ENCODE measurements at regions of chr20 and their contacts with region 1.

Region 1: GRCh38 chr20:62409931-62410745 is 3.1 kb upstream of the CABLES2 start:
- DNase-seq: peak in 1 of 2 experiments; percentile 85
- H3K4me3 ChIP-seq: peak overlapping the region in 1 of 4 experiments; percentile 34; a peak in 1 of 8 replicates
- H3K27ac ChIP-seq: no peak overlapping the region
- H3K4me1 ChIP-seq: peaks cover 0 to 26% (median 8%) of the 10 kb centered on the region in 4 experiments; a peak in 6 of 7 replicates
- H3K27me3 ChIP-seq: peaks cover 0 to 8% (median 1%) of the 10 kb centered on the region in 4 experiments; a peak in 2 of 7 replicates
- CTCF ChIP-seq: peak in 2 of 3 experiments; percentile 75 to 86; a peak in 3 of 4 replicates
- EP300 ChIP-seq: no peak
- POLR2A ChIP-seq: no peak
- RAD21 ChIP-seq: peak; percentile 79 to 87

Region 2: DNA sequence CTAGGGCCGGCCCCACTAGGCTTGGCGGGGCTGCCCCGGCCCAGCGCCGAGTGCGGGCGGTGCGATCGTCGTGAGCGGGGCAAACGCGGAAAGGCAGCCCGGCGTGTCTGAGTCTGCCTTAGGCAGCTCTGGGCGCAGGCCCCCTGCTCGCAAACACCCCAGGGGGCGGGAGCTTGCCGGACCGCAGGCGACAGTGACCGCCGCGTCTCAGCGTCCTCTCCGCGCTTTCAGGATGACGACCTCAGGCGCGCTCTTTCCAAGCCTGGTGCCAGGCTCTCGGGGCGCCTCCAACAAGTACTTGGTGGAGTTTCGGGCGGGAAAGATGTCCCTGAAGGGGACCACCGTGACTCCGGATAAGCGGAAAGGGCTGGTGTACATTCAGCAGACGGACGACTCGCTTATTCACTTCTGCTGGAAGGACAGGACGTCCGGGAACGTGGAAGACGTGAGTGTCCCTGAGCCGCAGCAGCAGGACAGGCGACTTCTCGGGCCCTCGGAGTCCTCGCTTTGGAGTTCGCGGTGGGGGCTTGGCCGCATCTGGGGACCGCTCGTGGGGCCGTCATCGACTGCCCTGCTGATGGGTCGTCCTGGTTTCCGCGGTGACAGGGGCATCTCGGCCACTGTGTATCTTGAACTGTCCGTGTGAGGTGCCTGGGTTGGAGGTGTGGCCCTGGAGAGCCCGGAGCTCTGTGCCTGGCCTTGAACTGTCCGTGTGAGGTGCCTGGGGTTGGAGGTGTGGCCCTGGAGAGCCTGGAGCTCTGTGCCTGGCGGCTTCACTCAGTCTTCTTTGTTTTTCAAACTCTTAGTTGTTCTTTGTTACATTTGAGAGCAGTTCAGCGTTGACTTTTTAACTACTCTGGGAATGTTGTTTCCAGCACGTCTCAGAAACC is 106.6 kb before region 1 on chr20:
- CTCF ChIA-PET with region 1: no interaction called
- POLR2A ChIA-PET with region 1: no interaction called
- DNase-seq: no peak
- H3K4me3 ChIP-seq: peak overlapping the region; percentile 62 to 96 (median 90)
- H3K27ac ChIP-seq: peak overlapping the region; percentile 60; the same call in 1 of the 2 replicates
- H3K4me1 ChIP-seq: peaks cover 0 to 9% (median 4%) of the 10 kb centered on the region in 4 experiments; a peak in 5 of 7 replicates
- H3K27me3 ChIP-seq: no peaks in the 10 kb centered on the region
- CTCF ChIP-seq: no peak
- EP300 ChIP-seq: no peak
- POLR2A ChIP-seq: no peak; a peak in 1 of 3 replicates
- RAD21 ChIP-seq: no peak

Region 3: GRCh38 chr20:62337558-62338293 is 72.4 kb before region 1 on chr20:
- CTCF ChIA-PET with region 1: no interaction called
- POLR2A ChIA-PET with region 1: no interaction called
- DNase-seq: no peak
- H3K4me3 ChIP-seq: no peak overlapping the region
- H3K27ac ChIP-seq: no peak overlapping the region
- H3K4me1 ChIP-seq: no peaks in the 10 kb centered on the region
- H3K27me3 ChIP-seq: no peaks in the 10 kb centered on the region
- CTCF ChIP-seq: no peak
- EP300 ChIP-seq: no peak
- POLR2A ChIP-seq: no peak
- RAD21 ChIP-seq: no peak

Region 4: GRCh38 chr20:62420951-62421715 is 11.0 kb after region 1 on chr20:
- CTCF ChIA-PET with region 1: interaction called, 104 read pairs
- POLR2A ChIA-PET with region 1: interaction called, 15 read pairs
- DNase-seq: no peak
- H3K4me3 ChIP-seq: no peak overlapping the region
- H3K27ac ChIP-seq: no peak overlapping the region
- H3K4me1 ChIP-seq: peaks cover 0 to 13% (median under 1%) of the 10 kb centered on the region in 4 experiments; a peak in 5 of 7 replicates
- H3K27me3 ChIP-seq: no peaks in the 10 kb centered on the region
- CTCF ChIP-seq: no peak
- EP300 ChIP-seq: no peak
- POLR2A ChIP-seq: no peak
- RAD21 ChIP-seq: no peak

Region 5: GRCh38 chr20:62427172-62428001 is 17.2 kb after region 1 on chr20 and contains the start of gene RBBP8NL:
- CTCF ChIA-PET with region 1: interaction called, 104 read pairs
- POLR2A ChIA-PET with region 1: interaction called, 15 read pairs
- DNase-seq: peak in 1 of 2 experiments; percentile 88
- H3K4me3 ChIP-seq: peak within 1 kb of the TSS in 3 of 4 experiments; percentile 22 to 36 (median 28); a peak in 5 of 8 replicates
- H3K27ac ChIP-seq: peak within 1 kb of the TSS; percentile 58
- H3K4me1 ChIP-seq: peaks cover 0 to 43% (median 31%) of the 10 kb centered on the region in 4 experiments; a peak in 6 of 7 replicates
- H3K27me3 ChIP-seq: no peaks in the 10 kb centered on the region; a peak in 1 of 7 replicates
- CTCF ChIP-seq: peak in 2 of 3 experiments; percentile 48 to 60; a peak in 3 of 4 replicates
- EP300 ChIP-seq: 0 out of 3 replicates have a peak, but pooled peaks of 1 of the 2 experiments have one; percentile 60
- POLR2A ChIP-seq: no peak
- RAD21 ChIP-seq: peak; percentile 44 to 63; a peak in 3 of 4 replicates
- total RNA-seq, gene RBBP8NL: 0.43 and 0.59 TPM in 2 replicates

Region 6: DNA sequence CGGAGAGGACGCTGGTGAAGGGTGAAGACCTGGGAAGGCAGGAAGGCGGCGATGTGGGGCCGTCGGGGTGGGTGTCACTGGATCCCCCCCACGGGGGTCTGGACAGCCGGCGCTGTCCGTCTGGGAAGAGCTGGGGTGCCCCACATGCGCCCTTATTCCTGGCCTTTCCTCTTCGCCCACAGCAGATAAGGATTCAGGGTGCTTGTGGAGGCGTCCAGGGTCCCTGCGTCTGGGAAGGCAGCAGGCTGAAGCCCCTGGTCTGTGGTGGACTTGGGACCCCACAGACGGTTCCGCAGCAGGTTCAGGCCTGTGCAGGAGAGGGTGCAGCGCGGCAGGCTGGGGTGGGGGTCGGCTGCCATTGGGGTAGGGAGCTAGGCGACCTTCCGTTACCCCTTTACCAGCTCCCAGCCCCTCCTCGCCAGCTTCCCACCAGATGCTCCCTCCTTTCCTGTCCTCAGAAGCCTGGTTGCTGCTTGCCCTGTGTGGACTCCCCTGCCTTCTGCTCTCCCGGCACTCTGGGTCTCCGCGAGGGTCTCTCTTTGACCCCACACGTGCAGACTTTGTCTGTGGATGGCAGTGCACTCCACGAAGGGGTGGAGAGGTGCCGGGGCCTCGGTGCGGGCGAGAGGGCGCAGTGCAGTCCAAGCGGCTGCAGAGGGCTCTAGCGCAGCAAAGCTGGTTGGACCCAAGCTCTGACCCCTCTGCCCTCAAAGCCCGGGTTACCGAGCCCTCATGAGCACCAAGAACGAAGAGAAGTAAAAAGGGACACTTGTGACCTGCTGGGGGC is 67.7 kb after region 1 on chr20:
- CTCF ChIA-PET with region 1: interaction called, 14 read pairs
- POLR2A ChIA-PET with region 1: interaction called, 4 read pairs
- DNase-seq: peak in 1 of 2 experiments; percentile 69
- H3K4me3 ChIP-seq: peak overlapping the region in 2 of 4 experiments; percentile 13 to 50; a peak in 4 of 8 replicates
- H3K27ac ChIP-seq: no peak overlapping the region
- H3K4me1 ChIP-seq: peaks cover 0 to 35% (median 20%) of the 10 kb centered on the region in 4 experiments; a peak in 6 of 7 replicates
- H3K27me3 ChIP-seq: peaks cover 69 to 97% (median 95%) of the 10 kb centered on the region in 4 experiments
- CTCF ChIP-seq: peak in 1 of 3 experiments; percentile 34; a peak in 2 of 4 replicates
- EP300 ChIP-seq: no peak
- POLR2A ChIP-seq: no peak
- RAD21 ChIP-seq: peak; percentile 31 to 42; a peak in 2 of 4 replicates